T-cell (primary cell): ENCODE measurements at regions of chr14 and their contacts with region 1.

Region 1: GRCh38 chr14:72679536-72680151 is 214.3 kb downstream of the DPF3 start:
- DNase-seq: no peak
- ATAC-seq: no peak
- H3K4me3 ChIP-seq: no peak overlapping the region
- H3K4me3 Mint-ChIP-seq: no peak overlapping the region
- H3K27ac ChIP-seq: no peak overlapping the region
- H3K27ac Mint-ChIP-seq: no peak overlapping the region
- H3K4me1 ChIP-seq: no peaks in the 10 kb centered on the region
- H3K4me1 Mint-ChIP-seq: peaks cover 0 to 2% (median 0%) of the 10 kb centered on the region in 3 donors
- H3K27me3 ChIP-seq: peaks cover 0 to 12% of the 10 kb centered on the region in 2 experiments
- H3K27me3 Mint-ChIP-seq: no peaks in the 10 kb centered on the region

Region 2: DNA sequence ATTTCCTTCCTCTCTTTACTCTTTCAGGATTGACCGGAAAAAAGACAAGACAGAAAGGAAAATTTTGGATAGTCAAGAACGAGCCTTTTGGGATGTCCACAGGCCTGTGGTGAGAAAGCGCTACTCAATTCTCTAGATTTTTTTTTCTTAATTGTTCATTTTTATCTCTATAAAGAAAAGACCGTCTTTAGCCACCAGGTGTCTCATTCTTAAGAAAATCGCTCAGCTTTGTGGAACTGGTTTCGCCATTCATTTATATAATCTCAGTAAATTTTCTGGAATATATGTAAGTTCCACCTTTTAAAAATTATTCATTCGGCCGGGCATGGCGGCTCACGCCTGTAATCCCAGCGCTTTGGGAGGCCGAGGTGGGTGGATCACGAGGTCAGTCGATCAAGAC is 206.8 kb before region 1 on chr14:
- CTCF ChIA-PET with region 1: no interaction called
- POLR2A ChIA-PET with region 1: no interaction called
- DNase-seq: no peak
- ATAC-seq: no peak
- H3K4me3 ChIP-seq: no peak overlapping the region
- H3K4me3 Mint-ChIP-seq: no peak overlapping the region
- H3K27ac ChIP-seq: no peak overlapping the region
- H3K27ac Mint-ChIP-seq: no peak overlapping the region
- H3K4me1 ChIP-seq: peaks cover 10 to 19% of the 10 kb centered on the region in 2 experiments
- H3K4me1 Mint-ChIP-seq: peaks cover 21 to 25% (median 22%) of the 10 kb centered on the region in 3 donors
- H3K27me3 ChIP-seq: no peaks in the 10 kb centered on the region
- H3K27me3 Mint-ChIP-seq: no peaks in the 10 kb centered on the region

Region 3: GRCh38 chr14:72745546-72745945 is 65.9 kb after region 1 on chr14:
- CTCF ChIA-PET with region 1: interaction called in 1 of 2 experiments, 11 read pairs
- POLR2A ChIA-PET with region 1: no interaction called
- DNase-seq: no peak
- ATAC-seq: no peak
- H3K4me3 ChIP-seq: no peak overlapping the region
- H3K4me3 Mint-ChIP-seq: no peak overlapping the region
- H3K27ac ChIP-seq: no peak overlapping the region
- H3K27ac Mint-ChIP-seq: no peak overlapping the region
- H3K4me1 ChIP-seq: no peaks in the 10 kb centered on the region
- H3K4me1 Mint-ChIP-seq: no peaks in the 10 kb centered on the region
- H3K27me3 ChIP-seq: peaks cover 0 to 5% of the 10 kb centered on the region in 2 experiments
- H3K27me3 Mint-ChIP-seq: no peaks in the 10 kb centered on the region

Region 4: GRCh38 chr14:73503648-73504047 is 824.0 kb after region 1 on chr14:
- CTCF ChIA-PET with region 1: no interaction called
- POLR2A ChIA-PET with region 1: no interaction called
- DNase-seq: peak in 3 of 35 experiments; percentile 6 to 28 (median 14)
- ATAC-seq: peak in 1 of 4 experiments; percentile 56
- H3K4me3 ChIP-seq: no peak overlapping the region
- H3K4me3 Mint-ChIP-seq: no peak overlapping the region
- H3K27ac ChIP-seq: no peak overlapping the region
- H3K27ac Mint-ChIP-seq: no peak overlapping the region
- H3K4me1 ChIP-seq: no peaks in the 10 kb centered on the region
- H3K4me1 Mint-ChIP-seq: peaks cover 0 to 7% (median 3%) of the 10 kb centered on the region in 3 donors
- H3K27me3 ChIP-seq: no peaks in the 10 kb centered on the region
- H3K27me3 Mint-ChIP-seq: no peaks in the 10 kb centered on the region